Gastrocnemius medialis (tissue), 4 donors: ENCODE measurements at regions of chr4 and their contacts with region 1.

Region 1: DNA sequence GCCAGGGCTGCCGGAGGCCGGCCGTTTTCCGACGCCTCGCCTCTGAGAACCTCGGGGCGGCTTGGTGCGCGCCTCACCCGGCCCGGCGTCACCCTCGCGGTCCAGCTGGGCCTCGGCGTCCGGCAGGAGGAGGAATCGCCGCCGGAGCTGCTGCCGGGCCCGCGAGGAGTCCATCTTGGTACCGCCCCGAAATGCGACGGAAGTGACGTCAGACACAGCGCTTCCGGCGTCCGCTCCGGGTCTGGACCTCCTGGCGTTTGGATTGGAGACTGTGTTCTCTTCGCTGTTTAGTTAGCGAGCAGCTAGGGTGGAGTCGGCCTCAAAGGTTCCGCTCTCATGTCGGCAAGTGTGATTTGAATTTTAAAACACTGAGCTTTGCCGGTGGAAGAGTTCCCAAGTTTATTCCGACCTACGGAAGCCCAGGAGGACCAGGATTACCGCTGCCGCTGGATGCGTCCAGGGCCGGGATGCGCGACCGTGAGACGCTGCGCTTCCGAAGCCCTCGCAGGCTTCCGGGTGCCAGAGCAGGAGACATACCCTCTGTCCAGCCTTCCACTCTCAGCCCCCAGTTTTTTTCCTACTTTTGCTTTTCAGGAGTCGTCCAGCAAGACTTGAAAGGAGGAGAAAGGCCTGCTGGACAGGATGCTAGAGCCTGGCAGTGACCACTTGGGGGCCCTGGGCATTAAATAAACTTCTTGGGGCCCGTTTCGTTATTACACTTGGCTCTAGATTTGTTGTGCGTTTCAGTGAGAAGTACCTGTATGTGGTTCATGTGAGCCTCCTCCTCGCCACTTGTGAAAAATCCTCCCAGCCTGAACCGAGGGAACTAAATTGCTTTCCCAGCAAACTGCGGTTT is at the start of gene TMEM128:
- DNase-seq: peak; percentile 83 to 87
- ATAC-seq: peak; percentile 98 to 99
- H3K4me3 ChIP-seq: peak within 1 kb of the TSS; percentile 79 to 88 (median 82)
- H3K27ac ChIP-seq: peak within 1 kb of the TSS; percentile 84 to 92 (median 88)
- H3K4me1 ChIP-seq: peaks cover 21 to 26% of the 10 kb centered on the region in 2 donors
- H3K27me3 ChIP-seq: no peaks in the 10 kb centered on the region
- CTCF ChIP-seq: peak in 4 of 5 experiments; percentile 22 to 31 (median 28)
- POLR2A ChIP-seq: peak; percentile 58 to 63
- total RNA-seq, gene TMEM128: 3.7 to 8.6 (median 4.6) TPM

Region 2: GRCh38 chr4:4289941-4290850 is 41.9 kb after region 1 on chr4 and contains the starts of genes LYAR and ZBTB49:
- in situ Hi-C with region 1: no loop called
- intact Hi-C with region 1: loop called (anchors 1 kb)
- DNase-seq: peak; percentile 84 to 93
- ATAC-seq: peak; percentile 86 to 96
- H3K4me3 ChIP-seq: peak within 1 kb of the TSS; percentile 69 to 93 (median 82)
- H3K27ac ChIP-seq: peak within 1 kb of the TSS; percentile 84 to 88 (median 86)
- H3K4me1 ChIP-seq: peaks cover 42 to 62% of the 10 kb centered on the region in 2 donors
- H3K27me3 ChIP-seq: no peaks in the 10 kb centered on the region
- CTCF ChIP-seq: no peak
- POLR2A ChIP-seq: peak; percentile 80 to 83
- total RNA-seq, gene LYAR: 9.9 to 26.6 (median 23.1) TPM
- total RNA-seq, gene ZBTB49: 1.7 to 2.8 (median 2.5) TPM

Region 3: DNA sequence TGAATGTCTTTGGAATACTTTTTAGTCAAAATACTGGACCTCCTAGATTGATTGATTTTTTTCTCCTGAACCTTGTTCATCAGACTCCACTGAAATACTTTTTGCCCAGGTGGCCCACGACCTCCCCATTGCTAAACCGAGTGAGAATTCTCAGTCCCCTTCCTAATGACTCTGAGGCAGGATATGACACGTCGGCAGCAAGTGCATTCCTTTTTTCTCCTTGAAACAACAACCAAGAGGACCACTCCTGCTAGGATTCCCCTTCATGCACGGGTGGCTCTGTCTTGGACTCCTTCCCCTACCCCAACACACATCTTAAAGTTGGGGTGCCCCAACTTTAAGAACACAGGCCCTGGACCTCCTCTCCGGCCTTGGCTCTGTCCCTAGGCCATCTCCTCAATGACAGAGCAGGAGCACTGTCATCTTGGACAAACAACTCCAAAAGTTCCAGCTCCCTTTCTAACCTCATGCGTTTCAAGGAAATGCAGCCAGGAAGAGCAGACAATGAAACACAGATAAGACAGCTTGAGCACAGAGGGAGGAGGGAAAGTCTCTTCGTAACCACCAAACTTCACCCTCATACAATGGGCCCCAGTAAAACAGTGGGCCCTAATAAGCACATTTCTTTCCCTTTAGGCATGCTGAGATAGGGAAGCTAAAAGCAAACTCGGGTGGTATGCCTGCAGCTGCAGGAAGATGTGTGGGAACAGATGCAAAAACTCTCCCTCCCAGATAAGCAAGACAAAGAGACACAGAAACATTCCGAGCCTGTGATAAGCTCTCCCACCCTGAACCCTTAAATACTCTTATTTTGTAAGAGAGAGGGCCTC is 75.7 kb after region 1 on chr4:
- in situ Hi-C with region 1: no loop called
- intact Hi-C with region 1: no loop called
- DNase-seq: no peak
- ATAC-seq: no peak
- H3K4me3 ChIP-seq: no peak overlapping the region
- H3K27ac ChIP-seq: no peak overlapping the region
- H3K4me1 ChIP-seq: no peaks in the 10 kb centered on the region
- H3K27me3 ChIP-seq: no peaks in the 10 kb centered on the region
- CTCF ChIP-seq: no peak
- POLR2A ChIP-seq: no peak